Activated CD8-positive, alpha-beta T cell treated with anti-CD3 and anti-CD28 coated beads for 36 hours (primary cell): ENCODE measurements at regions of chr13 and their contacts with region 1.

Region 1: DNA sequence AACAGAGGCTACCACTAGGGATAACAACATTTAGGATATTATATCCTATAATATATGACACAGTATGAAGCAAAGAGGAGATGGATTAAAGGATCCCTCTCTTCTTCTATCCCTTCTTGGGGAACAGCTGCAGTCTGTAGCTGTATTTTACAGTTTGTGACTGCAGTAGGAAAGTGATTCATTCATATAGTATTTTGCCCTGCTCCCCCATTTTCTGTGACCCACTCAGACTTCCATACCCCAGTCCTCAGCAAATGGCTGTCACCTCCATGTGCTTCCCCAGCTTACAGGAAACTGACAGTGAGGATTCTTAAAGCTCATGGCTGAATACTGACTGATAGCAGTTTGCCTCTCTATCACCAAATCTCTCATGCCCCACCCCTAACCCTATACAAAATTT is 27.5 kb downstream of the MICU2 start:
- DNase-seq: no peak
- ATAC-seq: no peak
- H3K4me3 Mint-ChIP-seq: no peak overlapping the region
- H3K27ac Mint-ChIP-seq: no peak overlapping the region
- H3K4me1 Mint-ChIP-seq: peaks cover 47% of the 10 kb centered on the region
- H3K27me3 Mint-ChIP-seq: no peaks in the 10 kb centered on the region
- CTCF ChIP-seq: no peak

Region 2: DNA sequence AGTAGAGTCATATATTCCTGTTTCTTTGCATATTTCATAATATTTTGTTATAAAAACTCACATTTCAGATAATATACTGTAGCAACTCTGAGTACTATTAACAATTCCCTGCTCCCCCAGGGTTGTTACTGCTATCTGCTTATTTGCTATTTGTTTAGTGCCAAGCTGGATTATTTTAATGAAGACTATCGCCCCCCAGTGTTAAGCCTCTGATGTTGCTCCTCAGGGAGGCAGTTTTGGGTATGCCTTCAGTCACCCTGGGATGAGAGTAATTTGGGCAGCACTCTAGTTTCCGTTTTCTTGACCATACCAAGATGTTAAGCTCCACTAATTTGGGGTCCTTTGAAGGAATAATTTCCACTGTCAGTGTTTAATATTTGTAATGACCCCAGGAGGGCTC is 18.4 kb before region 1 on chr13:
- CTCF ChIA-PET with region 1: interaction called, 10 read pairs
- POLR2A ChIA-PET with region 1: no interaction called
- intact Hi-C with region 1: no loop called
- DNase-seq: peak; percentile 18
- ATAC-seq: no peak
- H3K4me3 Mint-ChIP-seq: no peak overlapping the region
- H3K27ac Mint-ChIP-seq: no peak overlapping the region
- H3K4me1 Mint-ChIP-seq: peaks cover 4% of the 10 kb centered on the region
- H3K27me3 Mint-ChIP-seq: no peaks in the 10 kb centered on the region
- CTCF ChIP-seq: peak; percentile 43

Region 3: GRCh38 chr13:21610687-21611086 is 34.3 kb after region 1 on chr13:
- CTCF ChIA-PET with region 1: no interaction called
- POLR2A ChIA-PET with region 1: no interaction called
- intact Hi-C with region 1: no loop called
- DNase-seq: no peak
- ATAC-seq: no peak
- H3K4me3 Mint-ChIP-seq: no peak overlapping the region
- H3K27ac Mint-ChIP-seq: no peak overlapping the region
- H3K4me1 Mint-ChIP-seq: no peaks in the 10 kb centered on the region
- H3K27me3 Mint-ChIP-seq: peaks cover 8% of the 10 kb centered on the region
- CTCF ChIP-seq: no peak